ENCODE measurements at regions of chr14 and their contacts with region 1.

Region 1: GRCh38 chr14:51929166-51929565 is 60.2 kb upstream of the RTRAF start:
- DNase-seq: no peak
- H3K4me3 ChIP-seq: no peak overlapping the region
- H3K27ac ChIP-seq: no peak overlapping the region
- H3K4me1 ChIP-seq: no peaks in the 10 kb centered on the region
- CTCF ChIP-seq: no peak

Region 2: DNA sequence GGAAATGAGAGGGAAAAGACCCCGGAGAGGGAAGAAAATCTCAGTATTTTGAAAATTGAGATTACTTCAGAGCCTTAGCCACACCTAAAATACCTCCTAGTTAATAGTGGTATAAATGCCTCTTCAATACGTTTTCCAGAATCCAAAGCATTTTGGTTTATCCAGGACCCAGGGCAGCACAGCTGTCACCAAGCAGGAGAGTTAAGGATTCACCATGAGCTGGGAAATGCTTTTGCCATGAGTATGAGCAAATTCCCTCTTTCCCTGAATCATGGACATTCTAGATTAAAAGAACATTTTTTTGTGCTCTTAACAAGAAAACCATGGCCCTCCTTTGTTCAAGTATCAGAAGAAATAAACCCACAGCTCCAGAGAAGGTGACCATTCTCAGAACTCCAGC is 38.4 kb after region 1 on chr14:
- CTCF ChIA-PET with region 1: no interaction called
- POLR2A ChIA-PET with region 1: no interaction called
- intact Hi-C with region 1: loop called (anchors 5 kb)
- DNase-seq: no peak
- H3K4me3 ChIP-seq: no peak overlapping the region
- H3K27ac ChIP-seq: no peak overlapping the region
- H3K4me1 ChIP-seq: no peaks in the 10 kb centered on the region
- CTCF ChIP-seq: no peak

Measured in OCI-LY7 (cell line).